Activated T-helper 2 cell treated with anti-CD3 and anti-CD28 coated beads, Interferon-gamma antibody, Interleukin-2, Interleukin-4, amounts not matched to agents 10 μg/mL and 5 μg/mL and 100 μg/mL, durations not matched to agents 14 hours and 24 hours and 36 hours (primary cell): ENCODE measurements at regions of chr6 and their contacts with region 1.

Region 1: GRCh38 chr6:43516697-43517504 is at the starts of genes POLR1C and YIPF3:
- DNase-seq: peak; percentile 94
- H3K4me3 Mint-ChIP-seq: no peak within 1 kb of the TSS
- H3K27ac Mint-ChIP-seq: no peak within 1 kb of the TSS
- H3K4me1 Mint-ChIP-seq: peaks cover 18% of the 10 kb centered on the region
- H3K27me3 Mint-ChIP-seq: no peaks in the 10 kb centered on the region
- total RNA-seq, gene POLR1C: 60.8 and 63.8 TPM in 2 replicates
- total RNA-seq, gene YIPF3: 51.7 and 59.0 TPM in 2 replicates

Region 2: GRCh38 chr6:43376551-43376981 is 140.3 kb before region 1 on chr6:
- intact Hi-C with region 1: no loop called
- DNase-seq: no peak
- H3K4me3 Mint-ChIP-seq: no peak overlapping the region
- H3K27ac Mint-ChIP-seq: no peak overlapping the region
- H3K4me1 Mint-ChIP-seq: peaks cover 18% of the 10 kb centered on the region
- H3K27me3 Mint-ChIP-seq: peaks cover 23% of the 10 kb centered on the region

Region 3: GRCh38 chr6:43575772-43576551 is 59.1 kb after region 1 on chr6 and contains the starts of genes POLH and XPO5:
- intact Hi-C with region 1: loop called (anchors 2 kb)
- DNase-seq: peak; percentile 88
- H3K4me3 Mint-ChIP-seq: peak within 1 kb of the TSS; percentile 91
- H3K27ac Mint-ChIP-seq: peak within 1 kb of the TSS; percentile 91
- H3K4me1 Mint-ChIP-seq: peaks cover 44% of the 10 kb centered on the region
- H3K27me3 Mint-ChIP-seq: no peaks in the 10 kb centered on the region
- total RNA-seq, gene POLH: 35.7 and 44.5 TPM in 2 replicates
- total RNA-seq, gene XPO5: 114 and 119 TPM in 2 replicates